ENCODE measurements at regions of chr18 and their contacts with region 1.

Region 1: DNA sequence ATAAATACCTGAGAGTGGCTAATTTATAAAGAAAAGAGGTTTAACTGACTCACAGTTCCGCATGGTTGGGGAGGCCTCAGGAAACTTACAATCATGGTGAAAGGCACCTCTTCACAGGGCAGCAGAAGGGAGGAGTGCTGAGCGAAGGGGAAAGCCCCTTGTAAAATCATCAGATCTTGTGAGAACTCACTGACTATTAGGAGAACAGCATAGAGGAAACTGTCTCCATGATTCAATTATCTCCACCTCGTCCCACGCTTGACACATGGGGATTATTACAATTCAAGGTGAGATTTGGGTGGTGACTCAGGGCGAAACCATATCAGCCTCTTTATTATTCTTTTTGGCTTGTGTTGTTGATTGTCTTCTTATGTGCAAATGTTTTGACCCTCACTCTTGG is 76.2 kb downstream of the WDR7 start:
- DNase-seq: peak; percentile 58
- H3K4me3 Mint-ChIP-seq: no peak overlapping the region
- H3K27ac Mint-ChIP-seq: peak overlapping the region; percentile 7
- H3K4me1 Mint-ChIP-seq: peaks cover 17% of the 10 kb centered on the region
- H3K27me3 Mint-ChIP-seq: no peaks in the 10 kb centered on the region

Region 2: DNA sequence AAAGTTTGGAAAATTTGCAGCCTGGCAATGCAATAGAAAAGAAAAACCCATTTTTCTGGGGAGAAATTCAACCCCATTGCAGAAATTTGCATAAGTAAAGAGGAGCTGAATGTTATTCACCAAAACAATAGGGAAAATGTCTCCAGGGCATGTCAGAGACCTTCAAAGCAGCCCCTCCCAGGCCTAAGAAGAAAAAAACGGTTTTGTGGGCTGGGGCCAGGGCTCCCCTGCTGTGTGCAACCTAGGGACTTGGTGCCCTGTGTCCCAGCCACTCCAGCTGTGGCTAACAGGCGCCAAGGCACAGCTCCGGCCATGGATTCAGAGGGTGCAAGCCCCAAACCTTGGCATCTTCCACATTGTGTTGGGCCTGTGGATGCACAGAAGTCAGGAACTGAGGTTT is 313.5 kb before region 1 on chr18:
- CTCF ChIA-PET with region 1: no interaction called
- intact Hi-C with region 1: no loop called
- DNase-seq: no peak
- H3K4me3 Mint-ChIP-seq: no peak overlapping the region
- H3K27ac Mint-ChIP-seq: no peak overlapping the region
- H3K4me1 Mint-ChIP-seq: no peaks in the 10 kb centered on the region
- H3K27me3 Mint-ChIP-seq: no peaks in the 10 kb centered on the region

Region 3: DNA sequence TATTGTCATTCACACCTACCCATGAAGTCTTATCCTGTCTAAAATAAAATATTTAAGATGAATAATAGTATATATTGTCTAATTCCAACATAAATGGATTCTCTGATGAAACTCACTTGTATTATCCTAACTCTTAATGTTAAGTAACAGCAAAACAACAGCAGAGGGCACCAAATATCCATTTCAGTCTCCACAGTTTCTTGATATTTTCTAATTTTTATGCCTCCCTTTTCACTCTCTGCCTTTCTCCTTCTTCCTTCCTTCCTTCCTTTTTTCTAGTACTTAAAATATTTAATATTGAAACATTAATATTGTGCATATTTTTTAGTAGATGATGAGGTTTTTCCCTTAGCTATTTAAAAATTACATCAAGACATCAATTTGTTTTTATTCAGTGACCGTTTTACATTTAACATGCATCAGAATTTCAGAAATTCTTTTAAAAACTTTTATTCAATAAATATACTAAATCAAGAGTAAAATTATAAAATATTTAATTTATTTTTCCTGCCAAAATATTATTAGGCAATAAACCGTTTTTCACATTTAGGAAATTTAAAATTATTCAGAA is 21.4 kb after region 1 on chr18:
- CTCF ChIA-PET with region 1: no interaction called
- intact Hi-C with region 1: loop called (anchors 2 kb)
- DNase-seq: peak; percentile 10
- H3K4me3 Mint-ChIP-seq: no peak overlapping the region
- H3K27ac Mint-ChIP-seq: no peak overlapping the region
- H3K4me1 Mint-ChIP-seq: peaks cover 16% of the 10 kb centered on the region
- H3K27me3 Mint-ChIP-seq: no peaks in the 10 kb centered on the region